ENCODE measurements at regions of chr2 and their contacts with region 1.

Region 1: DNA sequence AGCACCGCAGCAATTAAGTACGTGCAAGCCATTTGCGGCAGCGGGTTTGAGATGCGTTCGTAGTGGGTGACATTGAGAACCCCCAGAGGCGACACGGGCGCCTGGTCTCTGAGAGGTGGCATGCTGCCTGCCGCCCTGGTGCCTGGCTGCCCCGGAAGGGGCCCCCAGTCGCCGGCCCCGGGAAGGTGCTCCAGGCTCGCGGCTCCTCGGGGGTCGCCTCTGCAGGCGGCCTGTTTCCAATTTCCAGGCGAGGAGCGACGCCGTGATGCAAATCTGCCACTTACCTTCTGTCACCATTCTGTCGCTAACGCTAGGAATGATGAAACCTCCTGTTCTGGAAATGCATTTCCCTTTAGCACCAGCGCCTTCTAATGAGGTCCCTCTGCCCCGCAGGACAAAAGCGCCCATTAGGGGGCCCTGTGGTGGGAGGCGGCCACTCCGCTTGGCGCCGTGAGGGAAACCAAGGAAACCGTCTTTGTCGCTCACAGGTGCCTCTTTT is 13.0 kb downstream of the KIF5C start:
- DNase-seq: peak in 30 of 42 donors; percentile 14 to 63 (median 26)

Region 2: DNA sequence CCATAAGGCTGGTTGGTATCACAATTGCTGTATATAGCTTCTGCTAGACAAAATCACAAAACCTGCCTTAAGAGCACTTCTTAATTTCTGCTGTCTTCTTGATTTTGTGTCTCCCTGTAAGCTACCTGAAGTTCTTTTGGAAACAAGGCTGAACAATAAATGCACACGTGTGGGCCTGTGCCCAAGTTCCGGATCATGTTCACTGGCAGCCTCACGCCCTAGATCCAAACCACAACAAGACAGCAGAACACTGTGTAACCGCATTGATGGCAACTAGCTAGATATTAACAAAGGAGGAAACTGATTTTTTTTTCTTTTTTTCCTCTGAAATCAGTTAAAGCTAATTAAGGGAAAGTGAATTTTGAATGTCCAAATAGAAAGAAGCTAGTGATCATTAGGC is 69.0 kb after region 1 on chr2:
- intact Hi-C with region 1: no loop called
- DNase-seq: no peak

Region 3: GRCh38 chr2:148971547-148971946 is 83.5 kb after region 1 on chr2:
- intact Hi-C with region 1: loop called (anchors 10 kb)
- DNase-seq: no peak

Measured in head of caudate nucleus (tissue), 42 donors.